Ascending aorta (tissue), 2 donors: ENCODE measurements at regions of chr14 and their contacts with region 1.

Region 1: GRCh38 chr14:32702562-32702961 is 236.1 kb upstream of the NPAS3 start:
- DNase-seq: peak; percentile 41 to 89
- H3K4me3 ChIP-seq: peak overlapping the region; percentile 23 to 38
- H3K27ac ChIP-seq: peak overlapping the region; percentile 83 to 88
- H3K4me1 ChIP-seq: peaks cover 3 to 38% of the 10 kb centered on the region in 2 donors
- H3K27me3 ChIP-seq: no peaks in the 10 kb centered on the region
- CTCF ChIP-seq: no peak

Region 2: GRCh38 chr14:32167907-32168306 is 534.7 kb before region 1 on chr14:
- intact Hi-C with region 1: no loop called
- DNase-seq: no peak
- H3K4me3 ChIP-seq: no peak overlapping the region
- H3K27ac ChIP-seq: no peak overlapping the region
- H3K4me1 ChIP-seq: no peaks in the 10 kb centered on the region
- H3K27me3 ChIP-seq: no peaks in the 10 kb centered on the region
- CTCF ChIP-seq: no peak

Region 3: DNA sequence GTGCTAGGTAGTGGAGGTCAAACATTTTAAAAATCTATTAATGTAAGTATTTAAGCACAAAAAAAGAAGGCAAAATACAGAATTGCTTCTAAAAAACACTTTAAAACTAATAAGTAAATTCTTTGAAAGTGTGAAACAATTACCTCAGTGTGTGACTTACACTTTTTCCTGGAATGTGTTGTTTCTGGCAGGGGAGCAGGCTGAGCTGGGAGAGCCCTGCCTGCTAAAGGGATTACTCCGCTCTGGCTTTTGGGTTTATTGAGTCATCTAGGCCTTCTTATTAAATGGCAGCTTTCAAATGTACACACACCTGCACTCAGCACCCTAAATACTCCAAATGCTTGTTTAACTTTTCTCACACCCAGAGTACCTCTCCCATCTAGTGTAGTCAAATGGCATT is 93.7 kb before region 1 on chr14:
- intact Hi-C with region 1: loop called (anchors 5 kb)
- DNase-seq: no peak
- H3K4me3 ChIP-seq: no peak overlapping the region
- H3K27ac ChIP-seq: peak overlapping the region in 1 of 2 donors; percentile 2
- H3K4me1 ChIP-seq: peaks cover 3 to 20% of the 10 kb centered on the region in 2 donors
- H3K27me3 ChIP-seq: no peaks in the 10 kb centered on the region
- CTCF ChIP-seq: no peak

Region 4: DNA sequence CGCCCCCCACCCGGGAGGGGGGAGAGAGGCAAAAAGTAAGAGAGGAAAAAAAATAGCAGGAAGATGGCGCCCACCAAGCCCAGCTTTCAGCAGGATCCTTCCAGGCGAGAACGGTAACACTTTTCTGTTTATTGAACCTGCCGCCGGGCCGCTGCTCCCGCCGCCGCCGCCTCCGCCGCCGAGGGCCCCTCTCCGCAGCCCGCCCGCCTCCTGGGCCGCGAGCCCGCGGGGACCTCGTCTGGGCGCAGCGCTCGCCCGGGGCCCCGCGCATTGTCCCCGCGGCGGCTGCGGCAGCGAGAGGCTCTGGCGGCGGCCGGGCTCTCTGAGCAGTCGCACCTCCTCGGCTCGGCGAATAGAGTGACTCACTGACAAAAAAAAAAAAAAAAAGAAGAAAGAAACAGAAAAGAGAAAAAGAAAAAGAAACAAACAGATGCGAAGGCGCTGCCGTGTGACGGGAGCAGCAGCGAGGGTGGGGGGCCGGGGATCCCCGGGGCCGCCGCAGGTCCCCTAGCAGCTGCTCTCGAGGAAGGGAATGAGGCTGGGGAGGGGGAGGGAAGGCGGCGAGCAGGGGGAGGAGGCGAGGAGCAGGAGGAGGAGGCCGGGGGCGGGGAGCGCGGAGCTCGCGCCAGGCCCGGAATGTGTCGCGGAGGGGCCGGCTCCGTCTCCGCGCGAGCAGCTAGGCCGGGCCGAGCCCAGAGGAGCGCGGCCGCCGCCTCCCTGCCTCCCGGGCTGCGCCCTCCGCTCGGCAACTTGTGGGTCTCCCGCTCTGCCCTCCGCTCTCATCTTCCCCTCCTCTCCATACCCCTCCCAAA is 236.9 kb after region 1 on chr14:
- intact Hi-C with region 1: loop called (anchors 10 kb)
- DNase-seq: peak in 1 of 2 donors; percentile 86
- H3K4me3 ChIP-seq: peak overlapping the region; percentile 72 to 80
- H3K27ac ChIP-seq: peak overlapping the region; percentile 81 to 94
- H3K4me1 ChIP-seq: peaks cover 3 to 10% of the 10 kb centered on the region in 2 donors
- H3K27me3 ChIP-seq: no peaks in the 10 kb centered on the region
- CTCF ChIP-seq: no peak

Region 5: DNA sequence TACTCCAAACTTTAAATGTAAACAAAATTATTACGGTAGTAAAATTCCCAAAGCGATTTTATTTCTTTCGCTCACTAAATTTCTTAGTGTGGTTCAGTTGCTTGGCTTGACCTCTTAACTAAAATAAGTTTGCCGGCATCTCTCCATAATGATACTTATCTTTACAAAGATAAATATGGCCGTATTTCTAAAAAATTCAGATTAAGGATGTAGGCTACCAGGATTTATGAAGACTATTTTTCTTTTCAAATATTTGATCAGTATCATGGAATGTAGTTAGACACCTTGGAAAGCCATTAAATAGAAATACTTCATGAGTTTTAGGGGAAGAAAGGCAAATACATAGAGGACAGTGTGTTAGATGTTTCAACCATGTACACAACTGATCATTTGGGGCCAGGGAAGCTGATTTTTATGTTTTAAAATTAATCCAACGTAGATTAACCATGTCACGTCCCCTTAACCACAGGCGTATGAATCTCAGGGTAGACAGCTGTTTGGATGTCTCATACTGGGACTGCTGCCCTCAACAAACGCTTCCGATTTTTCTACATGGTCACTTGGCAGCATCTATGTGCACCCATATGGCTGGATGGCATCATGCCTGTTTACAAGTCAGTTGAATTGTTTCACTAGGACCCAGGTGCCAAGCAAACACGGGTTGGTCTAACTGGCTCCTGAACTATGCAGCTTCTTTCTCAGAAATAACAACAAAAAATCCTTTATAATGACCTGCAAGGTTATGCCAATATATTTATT is 629.8 kb after region 1 on chr14:
- intact Hi-C with region 1: no loop called
- DNase-seq: no peak
- H3K4me3 ChIP-seq: no peak overlapping the region
- H3K27ac ChIP-seq: no peak overlapping the region
- H3K4me1 ChIP-seq: no peaks in the 10 kb centered on the region
- H3K27me3 ChIP-seq: no peaks in the 10 kb centered on the region
- CTCF ChIP-seq: no peak